H1 (cell line): ENCODE measurements at regions of chr1 and their contacts with region 1.

Region 1: GRCh38 chr1:57061369-57061768 is 95.6 kb upstream of the C8B start:
- DNase-seq: no peak
- H3K4me3 ChIP-seq: no peak overlapping the region
- H3K27ac ChIP-seq: no peak overlapping the region
- H3K4me1 ChIP-seq: no peaks in the 10 kb centered on the region
- H3K27me3 ChIP-seq: no peaks in the 10 kb centered on the region
- CTCF ChIP-seq: no peak
- EP300 ChIP-seq: no peak
- POLR2A ChIP-seq: no peak
- RAD21 ChIP-seq: peak in 1 of 2 experiments; percentile 22; a peak in 2 of 4 replicates

Region 2: GRCh38 chr1:57026624-57027354 is 34.6 kb before region 1 on chr1:
- CTCF ChIA-PET with region 1: no interaction called
- POLR2A ChIA-PET with region 1: no interaction called
- DNase-seq: no peak
- H3K4me3 ChIP-seq: no peak overlapping the region
- H3K27ac ChIP-seq: no peak overlapping the region
- H3K4me1 ChIP-seq: peaks cover 0 to 5% (median 2%) of the 10 kb centered on the region in 4 experiments; a peak in 3 of 7 replicates
- H3K27me3 ChIP-seq: no peaks in the 10 kb centered on the region
- CTCF ChIP-seq: no peak
- EP300 ChIP-seq: no peak
- POLR2A ChIP-seq: no peak
- RAD21 ChIP-seq: no peak

Region 3: GRCh38 chr1:57072401-57073110 is 11.2 kb after region 1 on chr1:
- CTCF ChIA-PET with region 1: interaction called, 11 read pairs
- POLR2A ChIA-PET with region 1: no interaction called
- DNase-seq: peak in 1 of 2 experiments; percentile 55
- H3K4me3 ChIP-seq: no peak overlapping the region
- H3K27ac ChIP-seq: no peak overlapping the region
- H3K4me1 ChIP-seq: peaks cover 0 to 7% (median 0%) of the 10 kb centered on the region in 4 experiments; a peak in 1 of 7 replicates
- H3K27me3 ChIP-seq: no peaks in the 10 kb centered on the region
- CTCF ChIP-seq: peak in 1 of 3 experiments; percentile 55; a peak in 1 of 4 replicates
- EP300 ChIP-seq: no peak
- POLR2A ChIP-seq: no peak
- RAD21 ChIP-seq: no peak

Region 4: GRCh38 chr1:57079454-57080157 is 18.2 kb after region 1 on chr1:
- CTCF ChIA-PET with region 1: interaction called, 16 read pairs
- POLR2A ChIA-PET with region 1: no interaction called
- DNase-seq: no peak
- H3K4me3 ChIP-seq: no peak overlapping the region
- H3K27ac ChIP-seq: no peak overlapping the region
- H3K4me1 ChIP-seq: no peaks in the 10 kb centered on the region
- H3K27me3 ChIP-seq: no peaks in the 10 kb centered on the region
- CTCF ChIP-seq: peak; percentile 28 to 68 (median 51)
- EP300 ChIP-seq: no peak
- POLR2A ChIP-seq: no peak
- RAD21 ChIP-seq: peak; percentile 55 to 58